Activated naive CD4-positive, alpha-beta T cell treated with anti-CD3 and anti-CD28 coated beads for 36 hours (primary cell): ENCODE measurements at regions of chrX and their contacts with region 1.

Region 1: GRCh38 chrX:53831662-53832635 is 145.4 kb upstream of the HUWE1 start:
- DNase-seq: peak; percentile 70
- H3K4me3 Mint-ChIP-seq: peak overlapping the region; percentile 42
- H3K27ac Mint-ChIP-seq: peak overlapping the region; percentile 81
- H3K4me1 Mint-ChIP-seq: peaks cover 18% of the 10 kb centered on the region
- H3K27me3 Mint-ChIP-seq: no peaks in the 10 kb centered on the region

Region 2: GRCh38 chrX:53476371-53476770 is 355.6 kb before region 1 on chrX:
- CTCF ChIA-PET with region 1: no interaction called
- intact Hi-C with region 1: no loop called
- DNase-seq: no peak
- H3K4me3 Mint-ChIP-seq: no peak overlapping the region
- H3K27ac Mint-ChIP-seq: no peak overlapping the region
- H3K4me1 Mint-ChIP-seq: no peaks in the 10 kb centered on the region
- H3K27me3 Mint-ChIP-seq: peaks cover 3% of the 10 kb centered on the region

Region 3: DNA sequence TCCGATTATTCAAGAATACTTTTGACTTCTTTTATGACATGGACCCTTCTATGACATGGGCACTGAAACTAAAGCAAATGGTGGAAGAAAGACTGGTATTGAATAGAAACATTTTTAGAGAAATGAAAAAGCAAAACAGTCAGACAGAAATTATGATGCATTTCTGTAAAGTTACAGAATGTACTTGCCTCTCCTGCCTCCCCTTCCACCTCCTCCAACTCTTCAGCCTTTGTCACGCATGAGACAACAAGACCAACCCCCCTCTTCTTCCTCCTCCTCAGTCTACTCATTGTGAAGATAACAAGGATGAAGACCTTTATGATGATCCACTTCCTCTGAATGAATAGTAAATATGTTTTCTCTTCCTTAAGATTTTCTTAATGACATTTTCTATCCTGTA is 99.2 kb before region 1 on chrX:
- CTCF ChIA-PET with region 1: interaction called, 3 read pairs
- intact Hi-C with region 1: loop called (anchors 1 kb)
- DNase-seq: peak; percentile 62
- H3K4me3 Mint-ChIP-seq: peak overlapping the region; percentile 32
- H3K27ac Mint-ChIP-seq: peak overlapping the region; percentile 99
- H3K4me1 Mint-ChIP-seq: peaks cover 55% of the 10 kb centered on the region
- H3K27me3 Mint-ChIP-seq: no peaks in the 10 kb centered on the region

Region 4: DNA sequence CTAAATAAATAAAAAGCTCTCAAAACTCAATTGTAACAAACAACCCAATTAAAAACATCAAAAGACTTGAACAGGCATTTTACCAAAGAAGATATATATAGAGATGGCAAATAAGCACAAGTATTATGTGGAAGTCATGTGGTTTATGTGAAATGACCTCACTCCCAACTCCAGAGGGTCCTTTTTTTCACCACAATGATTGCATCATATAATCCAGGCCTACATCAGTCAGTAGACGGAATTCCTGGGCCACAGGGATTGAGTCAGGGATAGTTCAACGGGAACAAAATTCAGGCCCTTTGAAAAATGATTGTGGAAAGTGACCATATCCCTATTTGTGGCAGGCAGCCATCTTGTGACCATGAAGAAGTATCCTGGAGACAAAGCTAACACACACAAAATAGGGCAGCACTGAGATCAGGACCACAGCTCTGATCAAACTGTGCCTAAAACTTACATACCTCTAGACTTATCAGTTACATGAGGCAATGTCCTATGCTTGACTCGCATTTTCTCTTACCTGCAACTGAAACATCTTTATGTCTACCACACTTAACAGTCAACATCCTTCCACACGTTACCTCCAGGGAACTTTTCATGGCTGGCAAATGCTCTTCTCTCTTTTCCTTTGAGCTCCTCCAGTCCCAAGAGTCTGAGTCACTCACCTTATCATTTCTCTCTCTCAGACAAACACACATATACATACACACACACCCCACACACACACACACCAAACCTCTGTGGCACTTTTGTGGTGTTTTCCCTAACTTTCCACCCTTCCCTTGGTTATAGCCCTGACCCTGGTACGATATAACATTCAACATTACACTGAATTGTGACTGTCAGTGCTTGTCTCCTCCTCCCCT is 98.8 kb after region 1 on chrX:
- CTCF ChIA-PET with region 1: no interaction called
- intact Hi-C with region 1: no loop called
- DNase-seq: peak; percentile 7
- H3K4me3 Mint-ChIP-seq: no peak overlapping the region
- H3K27ac Mint-ChIP-seq: no peak overlapping the region
- H3K4me1 Mint-ChIP-seq: peaks cover 13% of the 10 kb centered on the region
- H3K27me3 Mint-ChIP-seq: no peaks in the 10 kb centered on the region